AG04450 (cell line): ENCODE measurements at regions of chr9 and their contacts with region 1.

Region 1: DNA sequence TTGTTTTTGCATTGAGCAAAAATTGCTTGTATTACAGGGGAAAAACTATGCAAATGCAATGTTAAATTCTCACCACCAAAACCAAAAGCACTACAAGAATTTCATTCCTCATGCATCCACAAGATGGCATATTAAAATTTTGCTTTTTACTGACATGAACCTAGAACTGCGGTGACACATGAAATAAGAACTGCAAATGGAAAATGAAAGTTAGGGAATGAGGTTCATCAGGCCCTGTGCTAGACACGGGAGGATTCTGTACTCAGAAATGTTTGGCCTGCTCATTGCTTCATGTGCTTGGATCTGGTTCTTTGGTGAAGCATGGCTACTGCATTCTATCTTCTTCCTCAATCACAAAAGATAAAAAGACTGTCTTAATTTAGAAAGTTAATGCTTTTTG is 9.1 kb upstream of the RFK start:
- DNase-seq: peak; percentile 56
- H3K4me3 ChIP-seq: no peak overlapping the region
- H3K27ac ChIP-seq: no peak overlapping the region
- H3K27me3 ChIP-seq: no peaks in the 10 kb centered on the region
- CTCF ChIP-seq: peak; percentile 70

Region 2: DNA sequence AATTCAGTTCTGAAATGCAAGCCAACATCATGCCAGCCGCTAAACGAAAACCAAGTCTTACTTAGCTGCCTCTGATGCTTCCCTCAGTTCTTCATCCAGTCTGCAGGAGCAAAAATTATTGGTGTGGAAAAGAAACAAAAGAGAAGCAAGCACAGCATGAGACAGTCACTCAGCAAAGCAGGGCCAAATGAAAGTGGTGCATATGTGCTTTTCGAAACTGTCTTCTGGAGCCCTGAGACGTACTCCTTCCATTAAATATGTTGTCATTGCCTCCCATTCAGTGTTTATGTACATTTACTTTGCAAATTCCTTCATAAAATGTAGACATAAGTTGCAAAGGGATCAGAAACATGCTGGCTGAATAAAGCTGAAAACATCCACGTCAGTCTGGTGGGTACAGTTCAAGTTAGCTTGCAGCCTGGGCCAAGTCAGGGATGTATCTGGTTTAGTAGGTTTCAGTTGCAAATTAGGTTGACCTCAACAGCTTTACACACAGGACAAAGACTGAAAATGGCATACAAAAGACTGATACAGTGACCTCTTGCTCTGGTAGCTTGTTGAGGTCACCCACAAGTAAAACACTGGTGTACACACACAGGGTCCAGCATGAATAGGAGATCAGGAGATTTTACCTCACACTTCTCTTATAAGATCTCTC is 221.2 kb after region 1 on chr9:
- CTCF ChIA-PET with region 1: no interaction called
- POLR2A ChIA-PET with region 1: no interaction called
- DNase-seq: no peak
- H3K4me3 ChIP-seq: no peak overlapping the region
- H3K27ac ChIP-seq: no peak overlapping the region
- H3K27me3 ChIP-seq: no peaks in the 10 kb centered on the region
- CTCF ChIP-seq: no peak

Region 3: GRCh38 chr9:76704593-76705204 is 301.3 kb after region 1 on chr9:
- CTCF ChIA-PET with region 1: interaction called, 30 read pairs
- POLR2A ChIA-PET with region 1: no interaction called
- DNase-seq: peak; percentile 82
- H3K4me3 ChIP-seq: no peak overlapping the region
- H3K27ac ChIP-seq: no peak overlapping the region
- H3K27me3 ChIP-seq: peaks cover 14% of the 10 kb centered on the region
- CTCF ChIP-seq: peak; percentile 68